Activated CD4-positive, alpha-beta T cell treated with anti-CD3 and anti-CD28 coated beads for 36 hours (primary cell): ENCODE measurements at regions of chr1 and their contacts with region 1.

Region 1: DNA sequence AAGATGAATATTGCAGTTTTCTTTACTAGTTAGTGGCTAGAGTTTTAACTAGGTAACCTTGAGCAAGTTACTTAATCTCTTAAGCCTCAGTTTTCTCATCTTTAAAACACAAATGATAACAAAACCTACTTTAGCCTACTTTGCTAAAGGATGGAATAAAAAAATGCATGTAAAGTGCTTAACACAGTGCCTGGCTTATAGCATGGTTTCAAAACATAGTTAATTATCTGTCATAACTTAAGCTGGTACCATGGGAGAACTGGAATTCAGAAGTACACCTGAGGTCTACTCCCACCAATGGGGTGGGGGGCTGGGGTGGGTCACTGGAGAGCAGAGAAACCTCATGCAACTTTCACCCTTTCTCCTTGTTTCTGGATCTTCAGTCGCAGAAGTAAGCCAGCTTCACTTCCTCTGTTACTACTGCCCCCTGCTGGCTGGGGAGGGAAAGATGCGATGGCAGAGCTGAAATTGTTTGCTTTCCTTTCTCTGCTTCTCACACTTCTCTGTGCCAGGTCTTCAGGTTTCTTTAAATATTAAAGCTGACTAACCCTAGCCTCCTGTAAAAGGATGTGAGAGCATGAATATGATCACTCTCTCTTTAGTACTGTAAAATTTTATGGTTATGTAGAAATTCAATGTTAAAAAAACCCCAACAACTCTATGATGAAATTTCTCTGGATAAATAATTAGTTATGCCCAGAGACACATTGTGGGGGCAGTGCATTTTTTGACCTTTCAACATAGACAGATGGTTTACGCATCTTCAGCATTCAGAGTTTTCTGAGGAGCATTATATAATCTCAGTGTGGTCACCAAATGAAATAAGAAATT is 324.2 kb downstream of the HLX start:
- DNase-seq: peak; percentile 84
- ATAC-seq: peak; percentile 39
- H3K4me3 Mint-ChIP-seq: no peak overlapping the region
- H3K27ac Mint-ChIP-seq: no peak overlapping the region
- H3K4me1 Mint-ChIP-seq: no peaks in the 10 kb centered on the region
- H3K27me3 Mint-ChIP-seq: peaks cover 5% of the 10 kb centered on the region

Region 2: DNA sequence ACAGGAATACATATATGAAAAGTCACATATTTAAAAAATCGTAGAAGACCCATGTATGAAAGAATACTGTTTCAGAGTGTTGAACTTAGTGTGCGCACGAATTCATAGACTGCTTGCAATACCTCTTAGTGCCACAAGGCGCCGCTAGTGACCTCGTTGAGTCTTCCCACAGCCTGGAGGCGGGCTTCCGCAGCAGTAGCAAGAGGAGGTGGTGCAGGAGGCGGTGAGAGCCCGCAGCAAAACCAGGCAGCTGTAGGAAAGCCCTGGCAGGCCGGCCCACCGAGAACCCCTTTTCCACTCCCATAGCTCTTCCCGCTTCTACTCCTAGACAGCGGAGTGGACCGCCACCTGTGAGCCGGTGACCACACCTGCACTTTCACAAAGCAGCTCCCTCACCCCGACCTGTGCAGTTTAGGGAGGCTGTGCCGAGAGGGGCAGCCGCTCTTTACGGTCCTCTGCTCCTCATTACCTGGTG is 393.2 kb before region 1 on chr1:
- CTCF ChIA-PET with region 1: interaction called, 24 read pairs
- POLR2A ChIA-PET with region 1: no interaction called
- intact Hi-C with region 1: loop called (anchors 1 kb)
- DNase-seq: peak; percentile 86
- ATAC-seq: peak; percentile 94
- H3K4me3 Mint-ChIP-seq: peak overlapping the region; percentile 27
- H3K27ac Mint-ChIP-seq: no peak overlapping the region
- H3K4me1 Mint-ChIP-seq: peaks cover 6% of the 10 kb centered on the region
- H3K27me3 Mint-ChIP-seq: peaks cover 16% of the 10 kb centered on the region

Region 3: DNA sequence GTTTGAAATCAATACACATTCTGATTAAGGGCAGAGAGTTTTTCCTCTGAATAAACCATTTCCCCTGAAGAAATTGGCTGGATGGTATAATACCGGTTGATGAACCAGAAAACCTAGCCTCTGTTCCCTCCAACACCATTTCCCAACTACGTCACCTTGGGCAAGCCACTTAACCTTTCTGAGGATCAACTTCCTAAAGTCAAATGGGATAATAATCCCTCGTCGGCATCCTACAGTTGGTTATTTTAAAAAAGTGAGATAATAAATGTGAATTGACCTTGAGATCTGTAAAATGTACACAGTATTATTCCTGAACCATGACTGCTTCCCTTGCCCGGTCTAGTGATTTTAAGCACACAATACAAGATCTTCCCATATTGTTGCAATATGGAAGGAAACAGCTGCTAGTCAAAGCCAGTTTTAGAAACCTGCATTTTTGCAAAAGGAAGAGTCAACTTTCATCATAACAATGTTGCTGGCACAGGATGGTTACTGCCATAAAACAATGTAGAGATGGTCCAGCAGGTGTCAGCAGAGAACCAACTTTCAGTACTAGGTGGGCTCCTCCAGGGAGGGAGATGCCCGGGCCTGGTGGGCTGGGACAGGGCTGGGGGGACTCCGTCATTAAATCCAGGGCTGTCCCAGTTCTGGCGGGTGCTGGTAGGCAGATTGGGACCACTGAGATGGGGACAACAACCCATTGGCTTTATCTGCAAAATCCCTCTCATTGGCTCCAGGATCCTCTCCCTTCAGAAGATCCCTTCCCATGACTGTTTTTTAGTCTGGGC is 329.4 kb before region 1 on chr1:
- CTCF ChIA-PET with region 1: interaction called, 6 read pairs
- POLR2A ChIA-PET with region 1: no interaction called
- intact Hi-C with region 1: loop called (anchors 1 to 2 kb)
- DNase-seq: peak; percentile 47
- ATAC-seq: no peak
- H3K4me3 Mint-ChIP-seq: no peak overlapping the region
- H3K27ac Mint-ChIP-seq: no peak overlapping the region
- H3K4me1 Mint-ChIP-seq: peaks cover 23% of the 10 kb centered on the region
- H3K27me3 Mint-ChIP-seq: peaks cover 68% of the 10 kb centered on the region

Region 4: DNA sequence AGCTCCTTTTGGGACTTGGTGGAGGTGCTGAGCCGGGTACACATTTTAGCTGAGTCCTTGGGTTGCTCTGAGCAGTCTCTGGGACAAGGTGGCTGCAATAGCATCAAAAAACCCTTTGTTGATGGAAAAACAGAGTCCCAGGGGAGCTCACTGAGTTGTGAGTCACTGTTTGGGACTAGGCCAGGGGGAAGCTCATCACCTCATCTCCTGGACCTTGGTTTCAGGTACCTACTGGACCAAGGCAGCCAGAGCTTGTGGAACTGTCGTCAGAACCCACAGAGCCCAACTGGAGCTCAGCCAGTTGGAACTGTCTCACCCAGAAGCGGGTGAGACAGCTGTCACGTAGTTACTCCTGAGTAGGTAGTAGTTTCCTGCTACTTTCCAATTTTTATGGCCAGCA is 177.5 kb before region 1 on chr1:
- CTCF ChIA-PET with region 1: no interaction called
- POLR2A ChIA-PET with region 1: no interaction called
- intact Hi-C with region 1: no loop called
- DNase-seq: no peak
- ATAC-seq: no peak
- H3K4me3 Mint-ChIP-seq: no peak overlapping the region
- H3K27ac Mint-ChIP-seq: no peak overlapping the region
- H3K4me1 Mint-ChIP-seq: no peaks in the 10 kb centered on the region
- H3K27me3 Mint-ChIP-seq: no peaks in the 10 kb centered on the region

Region 5: DNA sequence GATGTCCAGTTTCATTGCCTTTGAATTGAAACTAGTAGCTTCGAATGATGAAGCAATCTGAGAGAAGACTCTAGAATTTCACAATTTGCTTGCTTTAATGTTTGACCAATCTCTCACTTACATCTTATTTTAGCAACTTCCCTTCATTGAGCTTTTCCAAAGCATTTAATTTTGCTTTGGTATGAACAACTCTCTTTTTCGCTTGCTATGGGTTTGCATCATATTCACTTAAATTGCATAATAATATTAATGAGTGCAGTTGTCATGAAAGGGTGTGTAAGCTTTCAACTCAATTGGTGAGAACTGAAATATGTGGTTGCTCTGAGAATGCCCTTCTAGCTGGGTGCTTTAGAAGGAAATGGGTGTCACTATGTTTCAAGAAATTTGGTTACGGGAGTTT is 15.0 kb before region 1 on chr1:
- CTCF ChIA-PET with region 1: interaction called, 11 read pairs
- POLR2A ChIA-PET with region 1: no interaction called
- intact Hi-C with region 1: no loop called
- DNase-seq: no peak
- ATAC-seq: no peak
- H3K4me3 Mint-ChIP-seq: no peak overlapping the region
- H3K27ac Mint-ChIP-seq: no peak overlapping the region
- H3K4me1 Mint-ChIP-seq: no peaks in the 10 kb centered on the region
- H3K27me3 Mint-ChIP-seq: peaks cover 2% of the 10 kb centered on the region

Region 6: DNA sequence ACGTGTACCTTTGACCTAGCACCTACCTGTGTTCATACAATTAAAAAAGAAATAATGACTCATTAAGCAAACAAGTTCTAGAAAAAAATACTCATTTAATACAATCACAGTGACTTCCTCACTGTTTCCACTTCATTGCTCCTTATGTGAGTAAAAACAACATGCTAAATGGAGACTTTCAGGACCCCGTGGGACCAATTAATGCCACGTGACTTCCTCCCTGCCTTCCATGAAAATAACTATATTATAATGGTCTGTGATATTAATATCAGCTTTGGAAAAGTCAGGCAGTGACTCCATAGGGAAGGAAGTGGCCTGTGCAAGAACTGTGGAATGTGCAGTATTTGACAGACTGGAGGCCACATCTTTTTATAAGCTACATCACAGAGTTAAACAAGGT is 13.6 kb after region 1 on chr1:
- CTCF ChIA-PET with region 1: interaction called, 12 read pairs
- POLR2A ChIA-PET with region 1: no interaction called
- intact Hi-C with region 1: no loop called
- DNase-seq: no peak
- ATAC-seq: no peak
- H3K4me3 Mint-ChIP-seq: no peak overlapping the region
- H3K27ac Mint-ChIP-seq: no peak overlapping the region
- H3K4me1 Mint-ChIP-seq: no peaks in the 10 kb centered on the region
- H3K27me3 Mint-ChIP-seq: peaks cover 2% of the 10 kb centered on the region

Region 7: GRCh38 chr1:221381910-221382623 is 178.6 kb after region 1 on chr1:
- CTCF ChIA-PET with region 1: no interaction called
- POLR2A ChIA-PET with region 1: no interaction called
- intact Hi-C with region 1: no loop called
- DNase-seq: no peak
- ATAC-seq: no peak
- H3K4me3 Mint-ChIP-seq: no peak overlapping the region
- H3K27ac Mint-ChIP-seq: no peak overlapping the region
- H3K4me1 Mint-ChIP-seq: no peaks in the 10 kb centered on the region
- H3K27me3 Mint-ChIP-seq: no peaks in the 10 kb centered on the region